ENCODE measurements at regions of chr12 and their contacts with region 1.

Region 1: GRCh38 chr12:6323340-6323994 is 13.0 kb downstream of the PLEKHG6 start:
- DNase-seq: peak; percentile 47 to 66 (median 52)
- H3K4me3 ChIP-seq: peak overlapping the region in 1 of 2 donors; percentile 3
- H3K4me3 Mint-ChIP-seq: peak overlapping the region; percentile 76 to 90 (median 82)
- H3K27ac ChIP-seq: no peak overlapping the region
- H3K27ac Mint-ChIP-seq: peak overlapping the region; percentile 80 to 96 (median 94)
- H3K4me1 ChIP-seq: peaks cover 32% of the 10 kb centered on the region
- H3K4me1 Mint-ChIP-seq: peaks cover 26 to 53% (median 34%) of the 10 kb centered on the region in 4 donors
- H3K27me3 ChIP-seq: no peaks in the 10 kb centered on the region
- H3K27me3 Mint-ChIP-seq: no peaks in the 10 kb centered on the region

Region 2: DNA sequence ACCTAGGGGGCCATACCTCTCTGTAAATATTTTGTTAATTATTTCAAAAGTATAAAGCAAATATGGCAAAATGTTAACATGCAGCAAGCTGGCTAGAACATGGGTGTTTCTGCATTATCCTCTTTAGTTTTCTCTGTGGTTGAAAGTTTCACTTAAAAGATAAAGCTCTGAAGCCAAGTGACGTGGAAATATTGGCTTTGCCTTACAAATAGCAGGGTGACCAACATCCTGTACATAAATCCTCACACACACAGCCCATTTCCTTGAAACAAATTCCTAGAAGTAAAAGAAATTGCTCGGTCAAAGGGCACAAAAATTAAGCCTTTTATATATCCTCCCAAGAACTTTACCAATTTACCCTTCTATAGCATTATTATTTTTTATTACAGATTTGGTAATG is 188.4 kb before region 1 on chr12:
- CTCF ChIA-PET with region 1: no interaction called
- POLR2A ChIA-PET with region 1: no interaction called
- intact Hi-C with region 1: no loop called
- DNase-seq: no peak
- H3K4me3 ChIP-seq: no peak overlapping the region
- H3K4me3 Mint-ChIP-seq: no peak overlapping the region
- H3K27ac ChIP-seq: no peak overlapping the region
- H3K27ac Mint-ChIP-seq: no peak overlapping the region
- H3K4me1 ChIP-seq: peaks cover 7% of the 10 kb centered on the region
- H3K4me1 Mint-ChIP-seq: peaks cover 5 to 9% (median 7%) of the 10 kb centered on the region in 4 donors
- H3K27me3 ChIP-seq: no peaks in the 10 kb centered on the region
- H3K27me3 Mint-ChIP-seq: no peaks in the 10 kb centered on the region

Region 3: DNA sequence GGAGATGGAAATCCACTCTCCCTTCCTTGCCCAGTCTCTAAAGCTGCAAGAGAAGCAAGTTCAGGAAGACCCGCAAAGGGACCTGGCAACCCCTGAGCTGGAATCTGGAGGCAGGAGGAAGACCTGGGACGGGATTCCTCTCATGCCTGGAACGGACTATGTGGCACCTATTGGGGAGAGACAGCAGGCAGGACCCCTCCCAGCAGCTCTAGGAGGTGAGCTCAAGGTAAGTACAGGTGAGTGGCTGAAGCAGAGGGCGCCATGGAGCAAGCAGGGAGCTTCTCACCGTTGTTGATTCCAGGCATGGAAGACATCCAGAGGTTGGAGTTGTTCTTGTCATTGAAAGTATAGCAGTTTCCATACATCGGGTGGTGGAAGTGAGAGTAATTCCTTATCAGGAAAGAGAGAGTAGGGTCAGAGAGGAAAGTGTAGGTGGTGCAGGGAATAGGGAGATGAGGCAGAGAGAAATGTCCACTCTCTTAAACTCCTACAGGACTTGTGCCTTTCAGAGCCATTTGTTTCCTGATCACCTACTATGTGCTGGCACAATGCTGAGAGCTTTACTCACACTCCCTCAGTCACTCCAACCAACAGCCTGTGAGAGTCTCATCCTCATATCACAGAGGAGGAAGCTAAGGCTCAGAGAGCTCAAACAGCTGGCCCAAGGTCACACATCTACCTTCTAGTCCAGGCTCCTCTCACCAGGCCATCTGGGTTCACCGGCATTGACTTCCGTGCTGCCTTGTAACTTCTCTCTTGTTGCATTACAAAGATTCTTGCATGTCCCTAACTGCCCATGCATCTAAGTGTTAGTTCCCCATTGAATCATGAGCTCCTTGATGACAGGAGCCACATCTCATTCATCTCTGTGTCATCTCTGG is 32.3 kb after region 1 on chr12:
- CTCF ChIA-PET with region 1: interaction called, 10 read pairs
- POLR2A ChIA-PET with region 1: no interaction called
- intact Hi-C with region 1: no loop called
- DNase-seq: no peak
- H3K4me3 ChIP-seq: no peak overlapping the region
- H3K4me3 Mint-ChIP-seq: no peak overlapping the region
- H3K27ac ChIP-seq: no peak overlapping the region
- H3K27ac Mint-ChIP-seq: no peak overlapping the region
- H3K4me1 ChIP-seq: no peaks in the 10 kb centered on the region
- H3K4me1 Mint-ChIP-seq: peaks cover 0 to 5% (median 2%) of the 10 kb centered on the region in 4 donors
- H3K27me3 ChIP-seq: no peaks in the 10 kb centered on the region
- H3K27me3 Mint-ChIP-seq: peaks cover 0 to 2% of the 10 kb centered on the region in 2 donors

Region 4: GRCh38 chr12:6376079-6376869 is 52.8 kb after region 1 on chr12:
- CTCF ChIA-PET with region 1: interaction called, 268 read pairs
- POLR2A ChIA-PET with region 1: interaction called, 4 read pairs
- intact Hi-C with region 1: no loop called
- DNase-seq: no peak
- H3K4me3 ChIP-seq: no peak overlapping the region
- H3K4me3 Mint-ChIP-seq: peak overlapping the region in 7 of 8 donors; percentile 29 to 76 (median 71)
- H3K27ac ChIP-seq: no peak overlapping the region
- H3K27ac Mint-ChIP-seq: peak overlapping the region in 5 of 7 donors; percentile 19 to 81 (median 55)
- H3K4me1 ChIP-seq: peaks cover 29% of the 10 kb centered on the region
- H3K4me1 Mint-ChIP-seq: peaks cover 8 to 40% (median 28%) of the 10 kb centered on the region in 4 donors
- H3K27me3 ChIP-seq: no peaks in the 10 kb centered on the region
- H3K27me3 Mint-ChIP-seq: peaks cover 0 to 3% of the 10 kb centered on the region in 2 donors

Region 5: DNA sequence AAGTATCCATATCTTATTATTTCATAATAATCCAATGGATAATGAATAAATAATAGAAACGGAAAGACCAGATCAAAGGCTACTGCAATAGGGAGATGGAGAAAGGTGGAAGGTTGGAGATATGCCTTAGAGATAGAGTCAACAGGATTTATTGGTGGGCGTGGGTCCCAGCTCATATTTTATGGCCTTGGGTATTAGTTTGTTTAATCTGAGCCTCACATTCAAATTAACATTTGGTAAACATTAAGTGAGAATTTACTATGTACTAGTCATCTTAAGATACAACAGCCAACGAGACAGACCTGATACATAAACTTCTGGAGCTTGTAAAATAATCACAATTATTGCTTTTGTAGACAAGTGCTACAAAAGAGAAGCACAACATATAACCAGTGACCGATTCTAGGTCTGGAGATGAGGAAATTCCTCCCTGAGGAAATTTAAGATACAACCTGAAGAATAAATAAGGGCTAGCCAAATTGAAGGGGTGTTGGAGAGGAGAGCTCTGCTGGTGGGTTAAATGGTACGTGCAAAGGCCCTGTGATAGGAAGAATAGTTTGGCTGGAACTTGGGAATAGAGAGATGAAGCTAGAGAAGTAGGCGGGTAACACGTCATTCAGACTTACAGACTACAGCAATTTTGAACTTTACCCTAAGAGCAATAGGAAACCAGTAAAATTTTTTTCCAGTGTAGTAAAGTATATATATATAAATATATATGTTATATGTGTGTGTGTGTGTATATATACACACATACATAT is 76.6 kb after region 1 on chr12:
- CTCF ChIA-PET with region 1: no interaction called
- POLR2A ChIA-PET with region 1: no interaction called
- intact Hi-C with region 1: no loop called
- DNase-seq: no peak
- H3K4me3 ChIP-seq: no peak overlapping the region
- H3K4me3 Mint-ChIP-seq: no peak overlapping the region
- H3K27ac ChIP-seq: no peak overlapping the region
- H3K27ac Mint-ChIP-seq: no peak overlapping the region
- H3K4me1 ChIP-seq: no peaks in the 10 kb centered on the region
- H3K4me1 Mint-ChIP-seq: no peaks in the 10 kb centered on the region
- H3K27me3 ChIP-seq: no peaks in the 10 kb centered on the region
- H3K27me3 Mint-ChIP-seq: no peaks in the 10 kb centered on the region

Region 6: GRCh38 chr12:6461401-6462233 is 138.2 kb after region 1 on chr12:
- CTCF ChIA-PET with region 1: interaction called, 18 read pairs
- POLR2A ChIA-PET with region 1: interaction called, 5 read pairs
- intact Hi-C with region 1: loop called (anchors 1 kb)
- DNase-seq: peak; percentile 82 to 96 (median 86)
- H3K4me3 ChIP-seq: peak overlapping the region in 1 of 2 donors; percentile 42
- H3K4me3 Mint-ChIP-seq: peak overlapping the region; percentile 53 to 89 (median 80)
- H3K27ac ChIP-seq: peak overlapping the region; percentile 82
- H3K27ac Mint-ChIP-seq: peak overlapping the region; percentile 90 to 99 (median 98)
- H3K4me1 ChIP-seq: peaks cover 89% of the 10 kb centered on the region
- H3K4me1 Mint-ChIP-seq: peaks cover 65 to 93% (median 80%) of the 10 kb centered on the region in 4 donors
- H3K27me3 ChIP-seq: no peaks in the 10 kb centered on the region
- H3K27me3 Mint-ChIP-seq: no peaks in the 10 kb centered on the region